Aorta (tissue), 5 donors: ENCODE measurements at regions of chr1 and their contacts with region 1.

Region 1: GRCh38 chr1:65002508-65003315 is 36.4 kb upstream of the JAK1 start:
- DNase-seq: peak; percentile 94 to 97
- ATAC-seq: peak; percentile 94
- H3K4me3 ChIP-seq: peak overlapping the region; percentile 63 to 68
- H3K27ac ChIP-seq: peak overlapping the region; percentile 97 to 98
- H3K4me1 ChIP-seq: peaks cover 0 to 2% of the 10 kb centered on the region in 2 donors
- H3K27me3 ChIP-seq: no peaks in the 10 kb centered on the region

Region 2: GRCh38 chr1:64956010-64956640 is 46.6 kb before region 1 on chr1:
- intact Hi-C with region 1: no loop called
- DNase-seq: no peak
- ATAC-seq: peak; percentile 44
- H3K4me3 ChIP-seq: no peak overlapping the region
- H3K27ac ChIP-seq: no peak overlapping the region
- H3K4me1 ChIP-seq: peaks cover 0 to 2% of the 10 kb centered on the region in 2 donors
- H3K27me3 ChIP-seq: no peaks in the 10 kb centered on the region

Region 3: DNA sequence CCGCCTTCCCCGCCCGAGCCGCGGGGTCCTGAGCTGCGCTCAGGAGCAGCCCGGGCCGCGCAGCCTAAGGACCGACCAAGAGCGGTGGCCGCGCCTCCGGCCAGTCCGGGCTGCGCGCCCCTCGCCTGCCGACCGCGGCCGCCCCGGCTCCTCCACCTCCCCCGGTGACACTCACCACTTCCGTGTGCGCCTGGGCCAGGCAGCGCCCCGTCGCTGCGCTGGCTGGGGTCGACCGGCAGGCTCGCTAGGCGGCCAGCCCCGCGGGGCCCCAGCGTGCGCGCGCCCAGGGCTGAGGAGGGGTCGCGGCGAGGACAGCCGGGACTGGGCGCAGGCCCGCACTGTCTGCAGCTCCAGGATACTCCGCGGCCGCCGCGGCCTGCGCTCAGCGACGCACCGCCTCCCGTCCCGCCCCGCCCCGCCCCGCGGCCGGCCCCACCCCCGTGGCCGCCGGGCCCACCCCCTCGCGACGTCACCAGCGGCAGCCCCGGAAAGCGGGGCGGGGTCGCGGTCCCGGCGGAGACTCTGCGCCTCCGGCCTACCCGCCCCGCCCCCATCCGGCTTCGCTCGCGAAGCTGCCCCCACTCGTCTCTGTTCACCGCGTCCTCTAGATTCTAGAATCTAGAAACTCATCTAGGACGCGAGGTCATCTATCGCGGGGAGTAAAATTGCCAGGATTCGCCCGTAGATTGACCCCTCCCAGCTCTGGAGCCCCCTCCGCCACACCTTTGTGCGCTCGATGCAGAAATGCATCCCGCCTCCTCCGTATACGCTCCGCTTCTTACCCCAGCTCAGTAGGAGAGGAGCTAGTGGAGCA is 36.3 kb before region 1 on chr1 and contains the start of gene JAK1:
- intact Hi-C with region 1: loop called in 1 of 2 experiments (anchors 5 kb)
- DNase-seq: peak; percentile 93 to 96
- ATAC-seq: peak; percentile 93
- H3K4me3 ChIP-seq: peak within 1 kb of the TSS; percentile 95 to 100
- H3K27ac ChIP-seq: peak within 1 kb of the TSS; percentile 44 to 98
- H3K4me1 ChIP-seq: no peaks in the 10 kb centered on the region
- H3K27me3 ChIP-seq: peaks cover 0 to 2% of the 10 kb centered on the region in 2 donors
- total RNA-seq, gene JAK1: 115 to 132 TPM